B cell (primary cell): ENCODE measurements at regions of chr11 and their contacts with region 1.

Region 1: GRCh38 chr11:85854557-85855340 is 434 bp upstream of the CCDC83 start:
- DNase-seq: peak; percentile 92
- ATAC-seq: peak; percentile 96
- H3K4me3 ChIP-seq: peak overlapping the region; percentile 51 to 74 (median 69)
- H3K4me3 Mint-ChIP-seq: peak overlapping the region; percentile 89
- H3K27ac ChIP-seq: peak overlapping the region; percentile 20 to 77
- H3K27ac Mint-ChIP-seq: peak overlapping the region; percentile 84
- H3K4me1 ChIP-seq: peaks cover 3 to 11% of the 10 kb centered on the region in 2 donors
- H3K4me1 Mint-ChIP-seq: peaks cover 12% of the 10 kb centered on the region
- H3K27me3 ChIP-seq: no peaks in the 10 kb centered on the region
- H3K27me3 Mint-ChIP-seq: peaks cover 11% of the 10 kb centered on the region
- CTCF ChIP-seq: peak; percentile 92

Region 2: DNA sequence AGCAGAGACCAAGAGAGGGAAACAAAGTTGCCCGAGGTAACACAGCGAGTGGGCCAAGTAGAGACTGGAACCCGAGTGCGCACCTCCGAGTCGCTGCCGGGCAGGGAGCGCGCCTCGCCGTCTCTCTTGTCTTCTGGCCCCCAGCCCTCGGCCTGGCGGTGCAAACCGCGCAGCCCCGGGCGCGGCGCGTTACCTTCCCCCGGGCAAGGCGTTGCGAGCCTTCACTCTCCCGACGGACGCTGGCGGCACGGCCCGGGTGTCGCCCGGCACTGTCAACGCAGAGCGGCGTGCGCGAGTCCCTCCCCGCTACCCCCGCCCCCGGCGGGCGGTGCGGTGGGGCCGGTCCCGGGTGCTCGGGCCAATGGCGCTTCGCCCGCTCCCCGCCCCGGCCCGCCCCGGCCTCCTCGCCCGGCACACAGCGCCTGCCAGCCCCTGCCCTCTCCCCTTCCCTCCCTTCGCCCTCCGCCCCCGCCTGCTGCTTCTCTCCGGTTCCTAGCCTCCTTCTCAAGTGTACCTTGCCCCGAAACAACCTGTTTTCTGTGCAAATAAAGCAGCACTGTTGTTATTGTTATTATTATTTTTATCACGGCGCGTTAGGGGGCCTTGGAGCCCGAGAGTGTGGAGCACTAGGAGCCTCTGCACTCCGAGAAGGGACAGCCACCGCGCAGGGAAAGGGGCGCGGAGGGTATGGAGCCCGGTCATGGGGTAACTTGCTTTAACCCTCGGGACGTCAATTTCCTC is 43.7 kb before region 1 on chr11 and contains the start of gene SYTL2:
- CTCF ChIA-PET with region 1: interaction called, 5 read pairs
- POLR2A ChIA-PET with region 1: no interaction called
- intact Hi-C with region 1: loop called (anchors 2 kb)
- DNase-seq: peak; percentile 64
- ATAC-seq: peak; percentile 98
- H3K4me3 ChIP-seq: peak within 1 kb of the TSS; percentile 39 to 70 (median 59)
- H3K4me3 Mint-ChIP-seq: peak within 1 kb of the TSS; percentile 88
- H3K27ac ChIP-seq: no peak within 1 kb of the TSS
- H3K27ac Mint-ChIP-seq: peak within 1 kb of the TSS; percentile 20
- H3K4me1 ChIP-seq: peaks cover 16 to 25% of the 10 kb centered on the region in 2 donors
- H3K4me1 Mint-ChIP-seq: peaks cover 23% of the 10 kb centered on the region
- H3K27me3 ChIP-seq: peaks cover 0 to 30% (median 3%) of the 10 kb centered on the region in 4 experiments
- H3K27me3 Mint-ChIP-seq: peaks cover 24% of the 10 kb centered on the region
- CTCF ChIP-seq: no peak
- total RNA-seq, gene SYTL2: 2.3 and 2.9 TPM in 2 replicates

Region 3: DNA sequence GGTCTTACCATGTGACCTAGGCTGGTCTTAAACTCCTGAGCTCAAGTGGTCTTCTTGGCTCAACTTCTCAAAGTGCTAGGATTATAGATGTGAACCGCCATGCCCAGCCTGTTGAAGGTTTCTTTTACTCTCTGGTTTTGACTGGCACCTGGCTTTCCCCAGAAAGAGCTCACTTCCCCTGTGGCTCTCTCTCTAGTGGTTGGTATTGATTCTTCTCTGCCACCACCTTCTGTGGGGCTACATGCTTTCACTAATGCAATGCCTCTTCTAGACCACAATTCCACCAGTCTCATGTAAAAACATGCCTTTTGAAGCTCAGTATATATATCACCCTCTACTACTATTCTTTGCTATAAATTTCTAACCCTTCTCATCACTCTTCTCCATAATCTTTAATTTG is 67.6 kb after region 1 on chr11:
- CTCF ChIA-PET with region 1: no interaction called
- POLR2A ChIA-PET with region 1: no interaction called
- intact Hi-C with region 1: no loop called
- DNase-seq: no peak
- ATAC-seq: no peak
- H3K4me3 ChIP-seq: no peak overlapping the region
- H3K4me3 Mint-ChIP-seq: no peak overlapping the region
- H3K27ac ChIP-seq: no peak overlapping the region
- H3K27ac Mint-ChIP-seq: no peak overlapping the region
- H3K4me1 ChIP-seq: no peaks in the 10 kb centered on the region
- H3K4me1 Mint-ChIP-seq: no peaks in the 10 kb centered on the region
- H3K27me3 ChIP-seq: peaks cover 0 to 5% (median 0%) of the 10 kb centered on the region in 4 experiments
- H3K27me3 Mint-ChIP-seq: peaks cover 23% of the 10 kb centered on the region
- CTCF ChIP-seq: no peak

Region 4: GRCh38 chr11:86193297-86194095 is 338.7 kb after region 1 on chr11:
- CTCF ChIA-PET with region 1: interaction called, 7 read pairs
- POLR2A ChIA-PET with region 1: no interaction called
- intact Hi-C with region 1: loop called (anchors 10 kb)
- DNase-seq: peak; percentile 80
- ATAC-seq: peak; percentile 94
- H3K4me3 ChIP-seq: peak overlapping the region; percentile 24 to 62 (median 52)
- H3K4me3 Mint-ChIP-seq: peak overlapping the region; percentile 67
- H3K27ac ChIP-seq: peak overlapping the region; percentile 21 to 70
- H3K27ac Mint-ChIP-seq: peak overlapping the region; percentile 90
- H3K4me1 ChIP-seq: peaks cover 20 to 22% of the 10 kb centered on the region in 2 donors
- H3K4me1 Mint-ChIP-seq: peaks cover 28% of the 10 kb centered on the region
- H3K27me3 ChIP-seq: no peaks in the 10 kb centered on the region
- H3K27me3 Mint-ChIP-seq: no peaks in the 10 kb centered on the region
- CTCF ChIP-seq: peak; percentile 79

Region 5: GRCh38 chr11:86456052-86456939 is 601.5 kb after region 1 on chr11:
- CTCF ChIA-PET with region 1: interaction called, 4 read pairs
- POLR2A ChIA-PET with region 1: no interaction called
- intact Hi-C with region 1: loop called (anchors 1 kb)
- DNase-seq: peak; percentile 67
- ATAC-seq: peak; percentile 54
- H3K4me3 ChIP-seq: no peak overlapping the region
- H3K4me3 Mint-ChIP-seq: no peak overlapping the region
- H3K27ac ChIP-seq: no peak overlapping the region
- H3K27ac Mint-ChIP-seq: no peak overlapping the region
- H3K4me1 ChIP-seq: peaks cover 0 to 3% of the 10 kb centered on the region in 2 donors
- H3K4me1 Mint-ChIP-seq: no peaks in the 10 kb centered on the region
- H3K27me3 ChIP-seq: no peaks in the 10 kb centered on the region
- H3K27me3 Mint-ChIP-seq: peaks cover 4% of the 10 kb centered on the region
- CTCF ChIP-seq: peak; percentile 91